T-cell (primary cell): ENCODE measurements at regions of chr1 and their contacts with region 1.

Region 1: GRCh38 chr1:46364612-46365011 is 24.0 kb downstream of the NSUN4 start:
- DNase-seq: no peak
- ATAC-seq: no peak
- H3K4me3 ChIP-seq: no peak overlapping the region
- H3K4me3 Mint-ChIP-seq: no peak overlapping the region
- H3K27ac ChIP-seq: no peak overlapping the region
- H3K27ac Mint-ChIP-seq: no peak overlapping the region
- H3K4me1 ChIP-seq: no peaks in the 10 kb centered on the region
- H3K4me1 Mint-ChIP-seq: no peaks in the 10 kb centered on the region
- H3K27me3 ChIP-seq: no peaks in the 10 kb centered on the region
- H3K27me3 Mint-ChIP-seq: no peaks in the 10 kb centered on the region

Region 2: GRCh38 chr1:46246548-46247435 is 117.8 kb before region 1 on chr1:
- CTCF ChIA-PET with region 1: no interaction called
- POLR2A ChIA-PET with region 1: no interaction called
- DNase-seq: peak in 27 of 35 experiments; percentile 3 to 55 (median 27)
- ATAC-seq: peak; percentile 13 to 71 (median 26)
- H3K4me3 ChIP-seq: peak overlapping the region; percentile 69 to 71
- H3K4me3 Mint-ChIP-seq: peak overlapping the region; percentile 85 to 90 (median 88)
- H3K27ac ChIP-seq: peak overlapping the region; percentile 16
- H3K27ac Mint-ChIP-seq: peak overlapping the region; percentile 45 to 49
- H3K4me1 ChIP-seq: peaks cover 5 to 20% of the 10 kb centered on the region in 2 experiments
- H3K4me1 Mint-ChIP-seq: peaks cover 12 to 18% (median 17%) of the 10 kb centered on the region in 3 donors
- H3K27me3 ChIP-seq: no peaks in the 10 kb centered on the region
- H3K27me3 Mint-ChIP-seq: no peaks in the 10 kb centered on the region

Region 3: DNA sequence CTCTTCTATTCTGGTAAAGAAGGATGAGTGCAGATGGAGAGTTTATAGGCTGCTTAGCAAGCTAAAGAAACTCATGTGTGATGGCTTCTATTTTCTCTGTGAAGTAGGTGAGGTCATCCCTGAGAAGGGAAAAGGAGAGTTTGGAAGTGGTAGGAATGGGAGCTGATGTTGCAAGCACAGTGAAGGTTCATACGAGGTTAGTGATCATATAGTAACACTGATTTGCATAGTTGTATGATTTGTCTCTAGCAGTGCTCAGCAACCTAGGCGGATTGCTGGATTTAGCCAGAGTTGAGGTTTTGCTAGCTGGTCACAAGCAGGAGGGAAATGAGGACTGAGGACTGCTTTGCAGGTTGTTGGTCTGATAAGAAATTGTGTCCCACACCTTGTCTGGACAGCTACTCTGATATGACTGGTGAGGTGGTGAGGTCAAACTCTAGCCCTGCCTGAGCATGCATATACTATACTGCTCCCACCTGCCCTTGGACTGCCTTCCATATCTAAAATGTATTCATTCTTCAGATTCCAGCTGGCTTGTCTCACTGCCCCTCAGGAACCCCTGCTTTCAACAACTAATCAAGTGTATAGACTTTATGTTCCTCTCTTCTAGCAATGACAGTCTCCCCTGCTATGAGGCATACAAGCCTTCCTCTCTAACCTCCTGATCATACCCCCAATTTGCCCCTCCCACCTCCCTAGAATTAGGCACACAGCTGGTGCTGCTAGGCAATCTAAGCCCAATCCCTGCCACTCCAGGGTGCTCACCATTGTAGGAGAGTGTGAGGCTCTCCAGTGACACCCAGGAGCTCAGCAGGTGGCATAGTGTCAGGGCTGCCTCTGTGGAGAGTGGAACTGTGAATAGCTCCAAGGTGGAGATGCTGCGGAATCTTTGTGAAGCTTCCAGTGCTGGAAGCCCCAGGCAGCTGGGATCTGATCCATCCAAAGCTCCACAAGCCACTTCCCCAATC is 79.7 kb before region 1 on chr1:
- CTCF ChIA-PET with region 1: no interaction called
- POLR2A ChIA-PET with region 1: interaction called in 1 of 2 experiments, 10 read pairs
- DNase-seq: no peak
- ATAC-seq: no peak
- H3K4me3 ChIP-seq: no peak overlapping the region
- H3K4me3 Mint-ChIP-seq: no peak overlapping the region
- H3K27ac ChIP-seq: no peak overlapping the region
- H3K27ac Mint-ChIP-seq: no peak overlapping the region
- H3K4me1 ChIP-seq: peaks cover 0 to 12% of the 10 kb centered on the region in 2 experiments
- H3K4me1 Mint-ChIP-seq: peaks cover 2 to 18% (median 5%) of the 10 kb centered on the region in 3 donors
- H3K27me3 ChIP-seq: no peaks in the 10 kb centered on the region
- H3K27me3 Mint-ChIP-seq: no peaks in the 10 kb centered on the region

Region 4: GRCh38 chr1:46333300-46334029 is 31.1 kb before region 1 on chr1:
- CTCF ChIA-PET with region 1: no interaction called
- POLR2A ChIA-PET with region 1: no interaction called
- DNase-seq: no peak
- ATAC-seq: no peak
- H3K4me3 ChIP-seq: no peak overlapping the region
- H3K4me3 Mint-ChIP-seq: no peak overlapping the region
- H3K27ac ChIP-seq: no peak overlapping the region
- H3K27ac Mint-ChIP-seq: no peak overlapping the region
- H3K4me1 ChIP-seq: no peaks in the 10 kb centered on the region
- H3K4me1 Mint-ChIP-seq: peaks cover 0 to under 1% (median 0%) of the 10 kb centered on the region in 3 donors
- H3K27me3 ChIP-seq: peaks cover 0 to 4% of the 10 kb centered on the region in 2 experiments
- H3K27me3 Mint-ChIP-seq: no peaks in the 10 kb centered on the region

Region 5: DNA sequence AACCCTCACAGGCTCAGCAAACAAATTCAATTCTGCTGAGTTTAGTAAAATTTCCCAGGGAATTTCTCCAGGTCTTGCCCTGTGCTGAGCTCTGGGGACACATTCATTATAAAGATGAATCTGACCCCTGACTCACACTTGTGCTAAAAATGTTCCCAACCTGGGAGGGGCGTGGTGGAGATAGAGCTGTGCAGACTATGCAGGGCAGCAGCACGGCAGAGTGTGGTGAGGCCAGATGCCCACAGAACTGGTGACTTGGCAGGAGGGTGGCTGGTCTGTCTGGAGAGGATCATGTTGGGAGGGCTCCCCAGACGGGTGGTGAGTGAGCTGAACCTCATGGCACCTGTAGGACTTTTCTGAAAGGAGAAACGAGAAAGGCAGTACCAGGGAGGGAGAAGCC is 61.1 kb after region 1 on chr1:
- CTCF ChIA-PET with region 1: no interaction called
- POLR2A ChIA-PET with region 1: no interaction called
- DNase-seq: no peak
- ATAC-seq: no peak
- H3K4me3 ChIP-seq: no peak overlapping the region
- H3K4me3 Mint-ChIP-seq: peak overlapping the region in 1 of 3 donors; percentile 21
- H3K27ac ChIP-seq: no peak overlapping the region
- H3K27ac Mint-ChIP-seq: peak overlapping the region in 1 of 2 donors; percentile 45
- H3K4me1 ChIP-seq: peaks cover 0 to 23% of the 10 kb centered on the region in 2 experiments
- H3K4me1 Mint-ChIP-seq: peaks cover 0 to 24% (median 2%) of the 10 kb centered on the region in 3 donors
- H3K27me3 ChIP-seq: peaks cover 0 to 54% of the 10 kb centered on the region in 2 experiments
- H3K27me3 Mint-ChIP-seq: peaks cover 29 to 45% of the 10 kb centered on the region in 2 donors